Right ventricle myocardium inferior (tissue), 1 donor: ENCODE measurements at regions of chr22 and their contacts with region 1.

Region 1: DNA sequence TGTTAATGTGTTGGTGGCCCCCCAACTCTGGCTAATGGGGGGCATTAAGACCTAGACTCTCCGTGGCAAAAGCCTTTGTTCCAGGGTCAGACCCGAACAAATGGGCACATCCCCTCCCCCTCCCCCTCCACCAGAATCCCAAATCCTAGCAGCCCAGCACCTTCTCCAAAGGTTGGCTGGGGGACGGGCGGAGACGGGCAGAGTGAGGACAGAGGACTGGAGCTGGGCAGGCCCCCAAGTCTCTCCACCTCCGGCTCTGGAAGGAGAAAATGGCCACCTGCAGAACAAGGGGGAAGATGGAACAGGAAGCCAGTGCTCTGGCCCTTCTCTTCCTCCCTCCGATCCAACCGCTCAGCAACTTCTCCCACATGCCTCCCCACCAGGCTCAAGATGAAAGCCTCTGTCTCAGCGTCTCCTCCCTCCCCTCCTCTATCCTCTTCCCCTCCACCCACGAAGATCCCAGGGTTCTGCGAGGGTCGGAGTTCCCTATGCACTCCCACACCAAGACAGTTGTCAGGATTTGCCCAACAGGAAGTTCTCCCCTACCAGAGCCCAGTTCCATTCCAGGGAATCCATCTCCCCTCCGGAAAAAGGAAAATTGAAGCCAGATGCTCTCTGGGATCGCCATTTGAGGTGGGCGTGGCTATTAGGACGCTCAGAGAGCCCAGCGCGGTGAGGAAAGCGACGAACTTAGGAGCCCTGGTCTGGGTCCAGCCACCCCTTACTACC is 20.1 kb downstream of the ADA2 start:
- DNase-seq: no peak
- ATAC-seq: peak; percentile 71

Region 2: GRCh38 chr22:17077255-17077654 is 121.9 kb before region 1 on chr22:
- intact Hi-C with region 1: loop called (anchors 5 kb)
- DNase-seq: no peak
- ATAC-seq: no peak

Region 3: GRCh38 chr22:17140826-17141766 is 58.1 kb before region 1 on chr22:
- intact Hi-C with region 1: no loop called
- DNase-seq: no peak
- ATAC-seq: no peak